ENCODE measurements at regions of chr12 and their contacts with region 1.

Region 1: DNA sequence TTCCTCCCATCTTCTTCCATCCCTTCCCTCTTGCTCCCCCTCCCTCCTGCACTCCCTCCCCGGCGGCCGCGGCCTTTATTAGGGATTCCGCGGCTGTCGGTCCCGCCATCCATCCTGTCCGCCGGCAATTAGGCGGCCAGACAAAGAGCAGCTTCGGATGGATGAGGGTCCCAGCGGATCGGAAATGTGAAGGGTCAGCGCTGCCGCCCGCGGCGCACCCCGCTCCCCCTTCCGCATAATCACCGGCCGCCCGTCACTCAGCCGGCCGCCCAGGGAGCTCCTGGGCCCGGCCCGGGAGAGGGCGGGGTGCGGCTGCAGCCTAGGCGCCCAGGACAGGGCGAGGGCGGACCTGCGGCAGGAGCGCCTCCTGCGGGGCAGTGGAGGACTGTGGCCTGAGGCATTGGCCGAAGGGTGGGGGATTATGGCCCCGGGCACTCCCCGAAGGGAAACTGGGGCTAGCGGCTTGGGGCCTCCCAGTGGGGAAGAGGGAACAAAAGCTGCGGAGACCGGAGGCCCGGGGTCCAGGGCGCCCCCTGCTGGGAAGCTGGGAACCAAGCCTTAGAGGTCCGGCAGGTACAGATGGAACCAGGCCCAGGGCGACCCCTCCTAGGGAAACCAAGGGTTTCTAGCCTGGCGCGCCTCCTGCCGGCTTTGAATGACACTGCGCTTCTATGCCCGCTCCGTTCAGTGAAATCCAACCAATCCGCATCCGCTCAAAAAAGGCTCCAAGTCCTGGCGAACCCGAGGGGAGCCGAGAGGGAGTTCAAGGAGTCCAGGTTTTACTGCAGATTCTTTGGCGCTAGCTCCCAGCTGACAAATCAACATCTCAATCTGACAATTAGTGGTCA is 4.4 kb upstream of the DNAJC22 start:
- DNase-seq: peak; percentile 83
- ATAC-seq: peak; percentile 69
- H3K4me3 ChIP-seq: peak overlapping the region in 4 of 5 experiments; percentile 29 to 51 (median 44)
- H3K4me3 Mint-ChIP-seq: peak overlapping the region; percentile 86
- H3K27ac ChIP-seq: no peak overlapping the region
- H3K27ac Mint-ChIP-seq: no peak overlapping the region
- H3K4me1 ChIP-seq: peaks cover 60 to 65% of the 10 kb centered on the region in 2 donors
- H3K4me1 Mint-ChIP-seq: peaks cover 58% of the 10 kb centered on the region
- H3K27me3 ChIP-seq: peaks cover 0 to 89% (median 47%) of the 10 kb centered on the region in 4 experiments
- H3K27me3 Mint-ChIP-seq: peaks cover 53% of the 10 kb centered on the region
- CTCF ChIP-seq: peak; percentile 96

Region 2: GRCh38 chr12:48936379-48936979 is 405.8 kb before region 1 on chr12:
- CTCF ChIA-PET with region 1: no interaction called
- POLR2A ChIA-PET with region 1: no interaction called
- intact Hi-C with region 1: no loop called
- DNase-seq: peak; percentile 81
- ATAC-seq: peak; percentile 57
- H3K4me3 ChIP-seq: no peak overlapping the region
- H3K4me3 Mint-ChIP-seq: no peak overlapping the region
- H3K27ac ChIP-seq: no peak overlapping the region
- H3K27ac Mint-ChIP-seq: peak overlapping the region; percentile 4
- H3K4me1 ChIP-seq: peaks cover 16 to 34% of the 10 kb centered on the region in 2 donors
- H3K4me1 Mint-ChIP-seq: peaks cover 37% of the 10 kb centered on the region
- H3K27me3 ChIP-seq: no peaks in the 10 kb centered on the region
- H3K27me3 Mint-ChIP-seq: no peaks in the 10 kb centered on the region
- CTCF ChIP-seq: peak; percentile 97

Region 3: DNA sequence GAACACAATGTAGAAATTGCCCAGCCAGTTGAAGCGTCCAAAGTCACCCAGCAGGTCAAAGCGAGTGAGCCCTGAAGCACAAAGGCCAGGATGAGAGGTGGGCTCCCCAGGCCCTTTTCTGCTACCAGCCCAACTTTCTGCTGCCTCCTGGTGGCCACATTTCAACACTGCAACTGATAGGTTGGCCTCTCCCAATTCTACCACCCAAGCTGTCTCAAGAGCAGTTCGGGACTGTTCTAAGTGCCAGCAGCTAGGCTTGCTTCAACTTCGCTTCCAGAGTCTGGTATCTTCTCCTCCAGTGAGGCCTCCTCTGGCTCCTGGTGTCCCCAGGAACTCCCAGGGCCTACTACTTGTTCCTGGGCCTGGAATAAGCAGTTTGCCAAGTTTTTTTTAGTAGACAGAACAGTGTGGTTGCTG is 244.2 kb before region 1 on chr12:
- CTCF ChIA-PET with region 1: interaction called, 3 read pairs
- POLR2A ChIA-PET with region 1: no interaction called
- intact Hi-C with region 1: loop called (anchors 10 kb)
- DNase-seq: peak; percentile 74
- ATAC-seq: peak; percentile 77
- H3K4me3 ChIP-seq: no peak overlapping the region
- H3K4me3 Mint-ChIP-seq: no peak overlapping the region
- H3K27ac ChIP-seq: no peak overlapping the region
- H3K27ac Mint-ChIP-seq: peak overlapping the region; percentile 20
- H3K4me1 ChIP-seq: peaks cover 15 to 16% of the 10 kb centered on the region in 2 donors
- H3K4me1 Mint-ChIP-seq: peaks cover 18% of the 10 kb centered on the region
- H3K27me3 ChIP-seq: peaks cover 0 to 22% (median 17%) of the 10 kb centered on the region in 4 experiments
- H3K27me3 Mint-ChIP-seq: peaks cover 17% of the 10 kb centered on the region
- CTCF ChIP-seq: peak; percentile 80

Region 4: DNA sequence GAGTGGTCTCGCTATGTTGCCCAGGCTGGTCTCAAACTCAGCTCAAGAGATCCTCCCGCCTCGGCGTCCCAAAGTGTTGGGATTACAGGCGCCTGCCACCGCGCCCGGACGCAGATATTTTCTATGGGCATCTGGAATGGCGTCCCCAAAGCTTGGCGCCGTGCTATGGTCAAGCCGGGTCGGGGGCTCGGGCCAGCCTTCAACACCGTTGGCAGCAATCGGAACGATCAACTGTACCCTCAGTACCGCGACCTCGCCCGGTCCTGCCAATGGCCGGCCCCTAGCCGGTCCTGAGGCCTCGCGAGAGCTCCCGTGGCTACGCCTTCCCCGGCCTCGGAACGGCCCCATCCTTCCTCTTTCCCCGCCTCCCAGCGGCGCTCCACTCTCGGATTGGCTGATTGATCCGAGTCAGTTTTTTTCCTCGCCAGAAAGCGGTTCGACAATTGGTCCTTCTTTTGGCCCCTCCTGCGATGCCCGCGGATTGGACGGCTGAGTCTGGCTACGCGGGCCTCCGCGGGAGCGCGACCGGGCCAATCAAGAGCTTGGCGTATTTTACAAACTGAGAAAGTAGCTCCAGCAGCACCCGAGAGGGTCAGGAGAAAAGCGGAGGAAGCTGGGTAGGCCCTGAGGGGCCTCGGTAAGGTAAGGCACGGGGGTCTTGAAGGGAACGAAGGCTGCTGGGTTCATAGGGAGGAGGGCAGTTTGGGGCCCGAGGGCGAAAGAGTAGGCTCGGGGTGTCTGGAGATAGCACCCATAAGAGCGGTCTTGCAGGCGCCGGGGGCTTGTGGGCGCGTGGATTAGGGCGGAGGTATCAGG is 19.4 kb before region 1 on chr12 and contains the start of gene TROAP:
- CTCF ChIA-PET with region 1: interaction called, 20 read pairs
- POLR2A ChIA-PET with region 1: interaction called, 9 read pairs
- intact Hi-C with region 1: loop called (anchors 1 kb)
- DNase-seq: peak; percentile 98
- ATAC-seq: peak; percentile 99
- H3K4me3 ChIP-seq: peak within 1 kb of the TSS; percentile 66 to 85 (median 70)
- H3K4me3 Mint-ChIP-seq: peak within 1 kb of the TSS; percentile 99
- H3K27ac ChIP-seq: peak within 1 kb of the TSS; percentile 40 to 74
- H3K27ac Mint-ChIP-seq: peak within 1 kb of the TSS; percentile 85
- H3K4me1 ChIP-seq: peaks cover 12 to 18% of the 10 kb centered on the region in 2 donors
- H3K4me1 Mint-ChIP-seq: peaks cover 23% of the 10 kb centered on the region
- H3K27me3 ChIP-seq: no peaks in the 10 kb centered on the region
- H3K27me3 Mint-ChIP-seq: no peaks in the 10 kb centered on the region
- CTCF ChIP-seq: no peak
- total RNA-seq, gene TROAP: 1.0 and 1.7 TPM in 2 replicates

Region 5: DNA sequence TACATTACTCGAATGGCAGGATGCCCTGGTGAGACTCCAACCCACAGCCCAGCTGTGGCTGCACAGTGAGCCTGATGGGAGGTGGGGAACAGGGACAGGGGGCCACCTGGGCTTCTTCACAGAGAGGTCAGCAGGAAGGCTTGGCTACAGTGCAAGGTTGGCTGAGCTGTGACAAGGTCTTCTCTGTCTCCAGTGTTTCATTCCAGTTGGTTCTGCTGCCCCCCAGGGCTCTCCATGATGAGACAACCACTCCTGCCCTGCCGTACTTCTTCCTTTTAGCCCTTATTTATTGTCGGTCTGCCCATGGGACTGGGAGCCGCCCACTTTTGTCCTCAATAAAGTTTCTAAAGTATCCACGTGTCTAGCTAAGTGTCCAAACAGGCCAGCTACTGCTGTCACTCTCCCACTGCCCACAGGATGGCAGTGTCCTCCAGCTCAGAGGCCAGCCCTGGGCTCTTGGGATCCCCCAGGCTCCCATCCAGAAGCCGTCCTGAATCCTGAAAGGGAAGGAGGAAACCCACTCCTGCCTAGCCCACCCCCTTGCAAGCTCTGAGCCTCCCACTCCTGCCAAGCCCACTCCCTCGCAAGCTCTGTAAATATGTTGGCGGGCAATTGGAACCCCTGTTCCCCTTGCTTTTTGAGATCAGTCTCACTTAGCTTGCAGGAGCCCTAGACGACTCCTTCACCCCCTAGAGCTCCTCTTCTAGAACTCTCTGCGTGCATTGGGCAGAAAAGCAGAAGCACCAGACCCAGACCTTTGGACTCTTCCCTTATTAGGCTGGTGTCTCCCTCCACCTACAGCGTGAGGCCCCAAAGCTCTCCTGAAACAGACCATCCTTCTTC is 10.7 kb before region 1 on chr12:
- CTCF ChIA-PET with region 1: interaction called, 95 read pairs
- POLR2A ChIA-PET with region 1: interaction called, 3 read pairs
- intact Hi-C with region 1: no loop called
- DNase-seq: peak; percentile 37
- ATAC-seq: no peak
- H3K4me3 ChIP-seq: no peak overlapping the region
- H3K4me3 Mint-ChIP-seq: peak overlapping the region; percentile 29
- H3K27ac ChIP-seq: no peak overlapping the region
- H3K27ac Mint-ChIP-seq: no peak overlapping the region
- H3K4me1 ChIP-seq: peaks cover 19 to 23% of the 10 kb centered on the region in 2 donors
- H3K4me1 Mint-ChIP-seq: peaks cover 19% of the 10 kb centered on the region
- H3K27me3 ChIP-seq: peaks cover 0 to 51% (median 32%) of the 10 kb centered on the region in 4 experiments
- H3K27me3 Mint-ChIP-seq: peaks cover 38% of the 10 kb centered on the region
- CTCF ChIP-seq: peak; percentile 45

Region 6: GRCh38 chr12:49366652-49367380 is 24.5 kb after region 1 on chr12:
- CTCF ChIA-PET with region 1: interaction called, 25 read pairs
- POLR2A ChIA-PET with region 1: interaction called, 9 read pairs
- intact Hi-C with region 1: no loop called
- DNase-seq: peak; percentile 90
- ATAC-seq: peak; percentile 78
- H3K4me3 ChIP-seq: peak overlapping the region; percentile 61 to 96 (median 80)
- H3K4me3 Mint-ChIP-seq: peak overlapping the region; percentile 87
- H3K27ac ChIP-seq: peak overlapping the region; percentile 90 to 91
- H3K27ac Mint-ChIP-seq: peak overlapping the region; percentile 98
- H3K4me1 ChIP-seq: peaks cover 33 to 39% of the 10 kb centered on the region in 2 donors
- H3K4me1 Mint-ChIP-seq: peaks cover 46% of the 10 kb centered on the region
- H3K27me3 ChIP-seq: no peaks in the 10 kb centered on the region
- H3K27me3 Mint-ChIP-seq: no peaks in the 10 kb centered on the region
- CTCF ChIP-seq: peak; percentile 44

Region 7: GRCh38 chr12:49828133-49829091 is 486.1 kb after region 1 on chr12 and contains the start of gene NCKAP5L:
- CTCF ChIA-PET with region 1: no interaction called
- POLR2A ChIA-PET with region 1: interaction called, 10 read pairs
- intact Hi-C with region 1: no loop called
- DNase-seq: peak; percentile 96
- ATAC-seq: peak; percentile 98
- H3K4me3 ChIP-seq: peak within 1 kb of the TSS; percentile 60 to 84 (median 73)
- H3K4me3 Mint-ChIP-seq: peak within 1 kb of the TSS; percentile 99
- H3K27ac ChIP-seq: peak within 1 kb of the TSS; percentile 36 to 75
- H3K27ac Mint-ChIP-seq: peak within 1 kb of the TSS; percentile 97
- H3K4me1 ChIP-seq: peaks cover 26% of the 10 kb centered on the region in 2 donors
- H3K4me1 Mint-ChIP-seq: peaks cover 39% of the 10 kb centered on the region
- H3K27me3 ChIP-seq: no peaks in the 10 kb centered on the region
- H3K27me3 Mint-ChIP-seq: no peaks in the 10 kb centered on the region
- CTCF ChIP-seq: no peak
- total RNA-seq, gene NCKAP5L: 13.2 and 13.4 TPM in 2 replicates

Region 8: GRCh38 chr12:49863946-49864797 is 521.9 kb after region 1 on chr12:
- CTCF ChIA-PET with region 1: no interaction called
- POLR2A ChIA-PET with region 1: no interaction called
- intact Hi-C with region 1: no loop called
- DNase-seq: no peak
- ATAC-seq: no peak
- H3K4me3 ChIP-seq: no peak overlapping the region
- H3K4me3 Mint-ChIP-seq: no peak overlapping the region
- H3K27ac ChIP-seq: no peak overlapping the region
- H3K27ac Mint-ChIP-seq: no peak overlapping the region
- H3K4me1 ChIP-seq: no peaks in the 10 kb centered on the region
- H3K4me1 Mint-ChIP-seq: no peaks in the 10 kb centered on the region
- H3K27me3 ChIP-seq: no peaks in the 10 kb centered on the region
- H3K27me3 Mint-ChIP-seq: peaks cover 21% of the 10 kb centered on the region
- CTCF ChIP-seq: no peak